RWPE1 (cell line): ENCODE measurements at regions of chr1 and their contacts with region 1.

Region 1: GRCh38 chr1:178031856-178032320 is 62.0 kb upstream of the RASAL2 start:
- DNase-seq: peak; percentile 70
- H3K27ac ChIP-seq: no peak overlapping the region
- CTCF ChIP-seq: peak; percentile 61

Region 2: GRCh38 chr1:178048426-178048825 is 16.5 kb after region 1 on chr1:
- CTCF ChIA-PET with region 1: interaction called, 12 read pairs
- POLR2A ChIA-PET with region 1: no interaction called
- DNase-seq: no peak
- H3K27ac ChIP-seq: no peak overlapping the region
- CTCF ChIP-seq: no peak